Breast epithelium (tissue), 4 donors: ENCODE measurements at regions of chr17 and their contacts with region 1.

Region 1: DNA sequence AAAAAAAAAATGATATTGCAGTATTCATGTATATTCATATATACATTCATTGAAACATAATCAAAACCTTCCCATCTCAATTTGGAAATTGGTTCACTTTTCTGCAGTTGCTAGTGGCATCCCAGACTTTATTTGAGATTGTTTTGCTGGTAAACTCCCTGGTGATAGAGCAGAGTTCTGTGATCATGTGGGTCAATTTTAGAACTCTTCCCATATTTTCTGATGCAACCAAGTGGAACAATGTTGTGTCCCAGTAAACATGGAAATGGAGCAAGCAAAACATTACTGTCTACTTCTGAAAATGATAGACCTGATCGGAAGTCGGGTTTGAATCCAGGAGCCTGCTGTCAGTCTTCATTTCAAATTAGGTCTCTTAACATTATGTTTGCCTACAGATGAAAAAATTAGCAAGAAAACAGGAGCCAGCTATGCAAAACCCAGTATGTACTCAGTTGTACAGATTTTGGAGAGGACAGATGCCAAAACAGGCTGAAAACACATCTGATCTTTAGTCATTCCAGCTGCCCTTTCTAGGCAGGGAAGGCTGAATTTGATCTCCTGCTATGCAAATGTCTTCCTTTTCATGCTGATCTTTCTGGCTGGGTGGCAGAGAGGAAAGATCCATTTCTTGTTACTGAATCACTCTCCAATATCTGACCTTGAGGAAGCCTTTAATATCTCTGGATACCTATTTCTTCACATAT is 786.6 kb upstream of the SOX9 start:
- DNase-seq: no peak
- H3K4me3 ChIP-seq: no peak overlapping the region
- H3K27ac ChIP-seq: no peak overlapping the region
- H3K4me1 ChIP-seq: no peaks in the 10 kb centered on the region
- H3K27me3 ChIP-seq: no peaks in the 10 kb centered on the region
- CTCF ChIP-seq: no peak
- POLR2A ChIP-seq: no peak

Region 2: GRCh38 chr17:71667661-71668060 is 333.5 kb after region 1 on chr17:
- intact Hi-C with region 1: loop called (anchors 5 kb)
- DNase-seq: peak in 1 of 2 donors; percentile 62
- H3K4me3 ChIP-seq: no peak overlapping the region
- H3K27ac ChIP-seq: no peak overlapping the region
- H3K4me1 ChIP-seq: no peaks in the 10 kb centered on the region
- H3K27me3 ChIP-seq: no peaks in the 10 kb centered on the region
- CTCF ChIP-seq: no peak
- POLR2A ChIP-seq: no peak